ENCODE measurements at regions of chr4 and their contacts with region 1.

Region 1: GRCh38 chr4:141702472-141703182 is 66.2 kb downstream of the IL15 start:
- DNase-seq: peak in 1 of 2 donors; percentile 35
- ATAC-seq: no peak
- H3K4me3 ChIP-seq: no peak overlapping the region
- H3K27ac ChIP-seq: no peak overlapping the region
- H3K4me1 ChIP-seq: peaks cover 0 to 10% (median 0%) of the 10 kb centered on the region in 9 donors
- H3K27me3 ChIP-seq: no peaks in the 10 kb centered on the region
- CTCF ChIP-seq: no peak

Region 2: DNA sequence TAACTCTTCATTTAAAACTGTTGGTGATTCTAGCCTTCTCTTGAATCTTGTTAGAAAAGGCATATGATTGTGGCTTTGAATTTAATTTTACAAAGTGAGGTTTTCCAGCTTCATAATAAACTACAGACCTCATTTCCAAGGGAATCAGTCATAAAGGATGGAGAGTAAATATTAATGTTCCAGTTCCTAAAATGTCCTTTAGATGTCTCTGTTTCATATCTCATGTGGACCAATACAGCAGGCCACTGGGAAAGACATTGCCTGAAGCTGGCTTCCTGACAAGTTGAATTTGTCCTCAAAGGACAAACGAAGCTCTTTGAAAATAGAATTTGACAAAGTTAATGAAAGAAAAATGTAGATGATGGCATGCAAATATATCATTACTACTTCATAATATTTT is 356.5 kb before region 1 on chr4:
- intact Hi-C with region 1: loop called in 3 of 10 experiments (anchors 10 kb)
- DNase-seq: no peak
- ATAC-seq: peak in 7 of 8 donors; percentile 59 to 86 (median 82)
- H3K4me3 ChIP-seq: no peak overlapping the region
- H3K27ac ChIP-seq: no peak overlapping the region
- H3K4me1 ChIP-seq: peaks cover 0 to 24% (median 0%) of the 10 kb centered on the region in 9 donors
- H3K27me3 ChIP-seq: no peaks in the 10 kb centered on the region
- CTCF ChIP-seq: peak; percentile 39 to 74 (median 64)

Region 3: GRCh38 chr4:141771889-141772830 is 69.5 kb after region 1 on chr4:
- intact Hi-C with region 1: no loop called
- DNase-seq: no peak
- ATAC-seq: no peak
- H3K4me3 ChIP-seq: no peak overlapping the region
- H3K27ac ChIP-seq: no peak overlapping the region
- H3K4me1 ChIP-seq: no peaks in the 10 kb centered on the region
- H3K27me3 ChIP-seq: no peaks in the 10 kb centered on the region
- CTCF ChIP-seq: no peak

Region 4: GRCh38 chr4:141802333-141802732 is 99.7 kb after region 1 on chr4:
- intact Hi-C with region 1: no loop called
- DNase-seq: no peak
- ATAC-seq: no peak
- H3K4me3 ChIP-seq: no peak overlapping the region
- H3K27ac ChIP-seq: no peak overlapping the region
- H3K4me1 ChIP-seq: no peaks in the 10 kb centered on the region
- H3K27me3 ChIP-seq: no peaks in the 10 kb centered on the region
- CTCF ChIP-seq: no peak